Activated naive CD4-positive, alpha-beta T cell treated with anti-CD3 and anti-CD28 coated beads for 36 hours (primary cell): ENCODE measurements at regions of chrX and their contacts with region 1.

Region 1: GRCh38 chrX:79270401-79270800 is 96.7 kb downstream of the ITM2A start:
- DNase-seq: peak; percentile 88
- H3K4me3 Mint-ChIP-seq: peak overlapping the region; percentile 52
- H3K27ac Mint-ChIP-seq: peak overlapping the region; percentile 89
- H3K4me1 Mint-ChIP-seq: peaks cover 42% of the 10 kb centered on the region
- H3K27me3 Mint-ChIP-seq: no peaks in the 10 kb centered on the region

Region 2: GRCh38 chrX:78103623-78104446 is 1166.6 kb before region 1 on chrX and contains the start of gene PGK1:
- CTCF ChIA-PET with region 1: no interaction called
- intact Hi-C with region 1: loop called (anchors 10 kb)
- DNase-seq: peak; percentile 95
- H3K4me3 Mint-ChIP-seq: peak within 1 kb of the TSS; percentile 95
- H3K27ac Mint-ChIP-seq: peak within 1 kb of the TSS; percentile 92
- H3K4me1 Mint-ChIP-seq: peaks cover 28% of the 10 kb centered on the region
- H3K27me3 Mint-ChIP-seq: no peaks in the 10 kb centered on the region
- total RNA-seq, gene PGK1: 744 to 766 TPM

Region 3: GRCh38 chrX:78595901-78596502 is 674.4 kb before region 1 on chrX:
- CTCF ChIA-PET with region 1: no interaction called
- intact Hi-C with region 1: loop called (anchors 5 kb)
- DNase-seq: peak; percentile 20
- H3K4me3 Mint-ChIP-seq: no peak overlapping the region
- H3K27ac Mint-ChIP-seq: no peak overlapping the region
- H3K4me1 Mint-ChIP-seq: no peaks in the 10 kb centered on the region
- H3K27me3 Mint-ChIP-seq: no peaks in the 10 kb centered on the region

Region 4: DNA sequence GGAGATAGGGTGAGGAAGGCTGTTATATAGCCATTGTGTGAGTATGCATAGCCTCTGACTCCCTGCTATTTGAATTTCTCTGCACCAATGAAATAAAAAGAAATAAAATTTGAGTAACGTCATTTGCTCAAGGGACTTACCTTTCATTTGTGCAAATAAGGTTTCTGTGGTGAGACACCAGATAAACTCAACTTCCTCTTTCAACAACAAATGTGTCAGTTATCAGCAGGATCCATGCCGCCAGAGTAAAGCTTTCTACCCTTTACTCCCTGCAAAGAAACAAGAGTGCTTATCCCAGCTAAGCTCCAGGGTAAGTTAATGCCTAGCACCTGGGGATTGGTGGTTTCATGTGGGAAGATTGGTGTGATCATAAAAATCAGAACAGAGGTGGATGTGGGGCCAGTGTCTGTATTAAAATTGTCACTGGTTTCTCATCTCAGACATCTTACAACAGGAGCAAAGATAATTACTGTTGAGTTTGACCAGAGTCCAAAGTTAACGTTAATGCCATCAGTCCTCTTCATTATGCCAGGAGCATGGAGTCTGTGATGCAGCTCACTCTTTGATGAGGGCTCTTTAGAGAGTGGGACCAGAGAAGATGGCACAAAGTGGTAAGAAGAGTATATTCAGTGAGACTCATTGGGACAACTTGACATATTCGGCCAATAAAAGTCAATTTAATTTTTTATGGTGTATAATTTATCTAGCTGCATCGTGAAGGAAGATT is 325.1 kb before region 1 on chrX and contains the start of gene P2RY10:
- CTCF ChIA-PET with region 1: no interaction called
- intact Hi-C with region 1: loop called (anchors 1 kb)
- DNase-seq: peak; percentile 45
- H3K4me3 Mint-ChIP-seq: peak within 1 kb of the TSS; percentile 94
- H3K27ac Mint-ChIP-seq: peak within 1 kb of the TSS; percentile 98
- H3K4me1 Mint-ChIP-seq: peaks cover 54% of the 10 kb centered on the region
- H3K27me3 Mint-ChIP-seq: no peaks in the 10 kb centered on the region
- total RNA-seq, gene P2RY10: 61.9 to 63.3 TPM

Region 5: DNA sequence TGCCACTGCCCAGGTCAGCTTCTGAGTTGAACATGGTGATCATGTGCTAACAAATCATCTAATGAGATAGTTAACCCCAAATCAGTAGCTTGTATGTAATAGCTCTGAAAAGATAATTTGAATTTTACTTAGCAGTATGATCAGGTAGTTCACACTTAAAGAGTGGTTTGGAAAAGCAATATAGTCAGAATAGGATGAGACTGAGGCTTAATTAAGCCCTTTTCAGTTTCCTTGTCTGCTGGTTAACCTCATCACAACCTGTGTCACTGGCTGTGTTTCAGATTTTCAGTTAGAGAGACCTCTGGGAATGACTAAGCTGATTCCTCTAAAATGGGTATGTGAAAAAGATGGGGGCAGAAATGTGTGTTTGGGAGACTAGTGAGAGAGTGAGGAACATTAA is 87.8 kb before region 1 on chrX:
- CTCF ChIA-PET with region 1: no interaction called
- intact Hi-C with region 1: loop called (anchors 1 kb)
- DNase-seq: peak; percentile 32
- H3K4me3 Mint-ChIP-seq: peak overlapping the region; percentile 29
- H3K27ac Mint-ChIP-seq: peak overlapping the region; percentile 90
- H3K4me1 Mint-ChIP-seq: peaks cover 68% of the 10 kb centered on the region
- H3K27me3 Mint-ChIP-seq: no peaks in the 10 kb centered on the region

Region 6: GRCh38 chrX:79366873-79367749 is 96.7 kb after region 1 on chrX and contains the start of gene ITM2A:
- CTCF ChIA-PET with region 1: no interaction called
- intact Hi-C with region 1: loop called (anchors 1 kb)
- DNase-seq: peak; percentile 76
- H3K4me3 Mint-ChIP-seq: peak within 1 kb of the TSS; percentile 86
- H3K27ac Mint-ChIP-seq: peak within 1 kb of the TSS; percentile 93
- H3K4me1 Mint-ChIP-seq: peaks cover 39% of the 10 kb centered on the region
- H3K27me3 Mint-ChIP-seq: no peaks in the 10 kb centered on the region
- total RNA-seq, gene ITM2A: 99.5 to 116 TPM